HCT116 (cell line): ENCODE measurements at regions of chr17 and their contacts with region 1.

Region 1: GRCh38 chr17:44919885-44920564 is 4.7 kb upstream of the GFAP start:
- DNase-seq: peak; percentile 65
- ATAC-seq: peak; percentile 95
- H3K4me3 ChIP-seq: no peak overlapping the region
- H3K27ac ChIP-seq: no peak overlapping the region
- H3K4me1 ChIP-seq: peaks cover 0 to 18% of the 10 kb centered on the region in 2 experiments; a peak in 2 of 4 replicates
- H3K27me3 ChIP-seq: no peaks in the 10 kb centered on the region
- CTCF ChIP-seq: peak; percentile 87 to 93 (median 87)
- POLR2A ChIP-seq: no peak
- RAD21 ChIP-seq: peak; percentile 96

Region 2: DNA sequence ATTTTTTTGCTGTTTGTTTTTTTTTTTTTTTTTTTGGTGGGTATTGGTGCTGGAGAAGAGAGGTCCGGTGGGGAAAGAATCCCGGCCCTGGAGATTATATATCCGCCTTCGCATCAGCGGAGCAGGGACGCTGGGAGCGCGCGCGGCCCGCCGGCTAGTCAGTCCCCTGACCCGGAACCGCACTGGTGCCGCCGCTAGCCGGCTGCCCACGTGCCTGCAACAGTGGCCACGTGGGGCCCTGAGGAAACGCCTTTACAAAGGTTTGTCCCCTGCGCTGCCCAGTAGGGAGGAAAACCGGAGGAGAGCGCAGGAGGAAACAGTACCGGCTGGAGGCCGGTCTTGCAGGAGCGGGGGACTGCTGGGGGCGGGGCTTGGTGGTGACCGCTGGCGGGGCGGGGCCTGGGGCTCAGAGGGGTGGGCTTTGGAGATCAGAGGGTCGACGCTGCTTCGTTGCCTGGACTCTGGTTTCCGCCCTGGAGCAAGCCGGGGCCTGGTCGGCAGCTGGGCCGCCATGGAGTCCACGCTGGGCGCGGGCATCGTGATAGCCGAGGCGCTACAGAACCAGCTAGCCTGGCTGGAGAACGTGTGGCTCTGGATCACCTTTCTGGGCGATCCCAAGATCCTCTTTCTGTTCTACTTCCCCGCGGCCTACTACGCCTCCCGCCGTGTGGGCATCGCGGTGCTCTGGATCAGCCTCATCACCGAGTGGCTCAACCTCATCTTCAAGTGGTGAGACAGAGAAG is 849.4 kb before region 1 on chr17 and contains the start of gene G6PC3:
- CTCF ChIA-PET with region 1: no interaction called
- POLR2A ChIA-PET with region 1: no interaction called
- RAD21 ChIA-PET with region 1: no interaction called
- intact Hi-C with region 1: no loop called
- DNase-seq: peak; percentile 96
- ATAC-seq: peak; percentile 84
- H3K4me3 ChIP-seq: peak within 1 kb of the TSS; percentile 76 to 81
- H3K27ac ChIP-seq: peak within 1 kb of the TSS; percentile 88
- H3K4me1 ChIP-seq: peaks cover 18 to 39% of the 10 kb centered on the region in 2 experiments
- H3K27me3 ChIP-seq: no peaks in the 10 kb centered on the region
- CTCF ChIP-seq: no peak
- POLR2A ChIP-seq: no peak
- RAD21 ChIP-seq: no peak; the same call in 1 of the 2 replicates
- total RNA-seq, gene G6PC3: 50.6 TPM

Region 3: GRCh38 chr17:44794851-44795413 is 125.1 kb before region 1 on chr17:
- CTCF ChIA-PET with region 1: no interaction called
- POLR2A ChIA-PET with region 1: no interaction called
- RAD21 ChIA-PET with region 1: no interaction called
- intact Hi-C with region 1: no loop called
- DNase-seq: peak; percentile 73
- ATAC-seq: peak; percentile 70
- H3K4me3 ChIP-seq: peak overlapping the region in 1 of 2 experiments; percentile 26; a peak in 2 of 4 replicates
- H3K27ac ChIP-seq: peak overlapping the region; percentile 61
- H3K4me1 ChIP-seq: peaks cover 15 to 57% of the 10 kb centered on the region in 2 experiments
- H3K27me3 ChIP-seq: no peaks in the 10 kb centered on the region
- CTCF ChIP-seq: no peak
- POLR2A ChIP-seq: no peak
- RAD21 ChIP-seq: 0 out of 2 replicates have a peak, but pooled peaks have one; percentile 3

Region 4: DNA sequence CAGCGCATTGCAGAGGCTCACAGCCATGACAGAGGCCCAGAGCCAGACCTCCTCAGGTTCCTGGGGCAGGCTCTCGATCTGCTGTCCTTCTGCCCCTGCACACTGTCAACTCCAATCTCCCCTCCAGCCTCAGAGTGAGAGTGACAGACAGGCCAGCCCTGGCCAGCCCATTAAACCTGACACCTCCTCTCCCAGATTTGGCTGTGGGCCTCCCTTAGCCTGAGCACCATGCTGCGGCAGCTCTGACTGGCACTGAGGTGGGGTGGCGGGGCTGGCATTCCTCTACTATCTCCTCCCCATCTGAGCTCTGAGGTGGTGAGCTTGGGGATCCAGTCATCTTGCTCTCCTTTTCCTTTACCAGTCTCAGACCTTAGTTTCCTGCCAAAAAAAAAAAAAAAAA is 63.5 kb after region 1 on chr17:
- CTCF ChIA-PET with region 1: no interaction called
- POLR2A ChIA-PET with region 1: no interaction called
- RAD21 ChIA-PET with region 1: no interaction called
- intact Hi-C with region 1: no loop called
- DNase-seq: no peak
- ATAC-seq: no peak
- H3K4me3 ChIP-seq: no peak overlapping the region
- H3K27ac ChIP-seq: no peak overlapping the region
- H3K4me1 ChIP-seq: no peaks in the 10 kb centered on the region
- H3K27me3 ChIP-seq: peaks cover 3% of the 10 kb centered on the region
- CTCF ChIP-seq: no peak
- POLR2A ChIP-seq: no peak
- RAD21 ChIP-seq: no peak

Region 5: DNA sequence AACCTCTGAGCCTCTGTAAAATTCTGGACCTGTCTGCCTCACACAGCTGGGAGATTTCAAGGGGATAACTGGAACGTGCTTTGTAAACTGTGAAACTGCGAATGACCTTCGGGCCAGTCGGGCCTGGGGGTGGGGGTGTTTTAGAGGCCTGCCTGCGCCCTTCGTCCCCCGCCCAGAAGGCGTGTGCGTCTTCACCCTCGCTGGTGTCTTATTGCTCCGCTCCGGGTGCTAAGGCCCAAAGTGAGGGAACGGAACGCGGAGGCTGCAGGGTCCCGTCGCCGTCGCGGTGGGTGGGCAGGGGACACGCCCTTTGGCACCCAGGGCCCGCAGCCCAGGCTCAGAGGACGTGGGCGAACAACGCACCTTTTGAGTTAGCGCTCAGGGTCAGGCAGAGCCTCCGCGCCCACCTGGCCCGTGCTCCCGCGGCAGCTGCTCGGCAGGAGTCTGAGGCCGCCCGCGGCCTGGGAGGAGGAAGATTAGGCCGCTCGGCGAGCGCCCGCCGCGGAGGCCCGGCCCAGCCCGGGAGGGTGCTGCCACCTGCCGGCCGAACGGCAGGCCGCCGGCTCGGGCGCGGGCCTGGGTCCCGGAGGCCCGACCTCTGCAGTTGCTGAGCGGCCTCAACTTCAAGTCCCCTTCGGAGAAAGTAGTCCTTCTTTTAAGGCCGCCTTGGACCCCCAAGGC is 101.7 kb after region 1 on chr17:
- CTCF ChIA-PET with region 1: interaction called, 63 read pairs
- POLR2A ChIA-PET with region 1: interaction called, 3 read pairs
- RAD21 ChIA-PET with region 1: interaction called, 3 read pairs
- intact Hi-C with region 1: loop called (anchors 1 kb)
- DNase-seq: no peak
- ATAC-seq: peak; percentile 81
- H3K4me3 ChIP-seq: no peak overlapping the region
- H3K27ac ChIP-seq: no peak overlapping the region
- H3K4me1 ChIP-seq: peaks cover 11 to 29% of the 10 kb centered on the region in 2 experiments; a peak in 3 of 4 replicates
- H3K27me3 ChIP-seq: no peaks in the 10 kb centered on the region
- CTCF ChIP-seq: peak; percentile 42 to 87 (median 72); a peak in 5 of 6 replicates
- POLR2A ChIP-seq: no peak
- RAD21 ChIP-seq: peak; percentile 62

Region 6: GRCh38 chr17:45098869-45099616 is 179.0 kb after region 1 on chr17:
- CTCF ChIA-PET with region 1: interaction called, 10 read pairs
- POLR2A ChIA-PET with region 1: no interaction called
- RAD21 ChIA-PET with region 1: interaction called in 1 of 2 experiments, 4 read pairs
- intact Hi-C with region 1: loop called (anchors 1 kb)
- DNase-seq: peak; percentile 51
- ATAC-seq: peak; percentile 96
- H3K4me3 ChIP-seq: no peak overlapping the region
- H3K27ac ChIP-seq: peak overlapping the region; percentile 19; the same call in 1 of the 2 replicates
- H3K4me1 ChIP-seq: peaks cover 0 to 3% of the 10 kb centered on the region in 2 experiments; a peak in 1 of 4 replicates
- H3K27me3 ChIP-seq: no peaks in the 10 kb centered on the region
- CTCF ChIP-seq: peak; percentile 73 to 94 (median 92)
- POLR2A ChIP-seq: no peak
- RAD21 ChIP-seq: peak; percentile 72